K562 (cell line): ENCODE measurements at regions of chrX and their contacts with region 1.

Region 1: GRCh38 chrX:38803586-38804431 is 2.5 kb downstream of the MID1IP1 start:
- DNase-seq: peak; percentile 75 to 91 (median 84)
- ATAC-seq: peak; percentile 73
- H3K4me3 ChIP-seq: peak overlapping the region; percentile 86
- H3K27ac ChIP-seq: peak overlapping the region; percentile 96
- H3K4me1 ChIP-seq: peaks cover 19 to 34% of the 10 kb centered on the region in 2 experiments
- H3K27me3 ChIP-seq: no peaks in the 10 kb centered on the region
- CTCF ChIP-seq: 0 out of 6 replicates have a peak, but pooled peaks of 1 of the 3 experiments have one; percentile 1
- EP300 ChIP-seq: peak; percentile 15; the same call in 1 of the 2 replicates
- POLR2A ChIP-seq: peak; percentile 96
- RAD21 ChIP-seq: 0 out of 4 replicates have a peak, but pooled peaks of 1 of the 2 experiments have one; percentile 6

Region 2: GRCh38 chrX:38636949-38637819 is 166.6 kb before region 1 on chrX:
- CTCF ChIA-PET with region 1: no interaction called
- POLR2A ChIA-PET with region 1: no interaction called
- in situ Hi-C with region 1: no loop called
- intact Hi-C with region 1: loop called (anchors 5 kb)
- DNase-seq: no peak
- ATAC-seq: no peak
- H3K4me3 ChIP-seq: no peak overlapping the region
- H3K27ac ChIP-seq: no peak overlapping the region; the same call in 2 of the 3 replicates
- H3K4me1 ChIP-seq: peaks cover 8 to 69% of the 10 kb centered on the region in 2 experiments
- H3K27me3 ChIP-seq: no peaks in the 10 kb centered on the region
- CTCF ChIP-seq: no peak
- EP300 ChIP-seq: no peak
- POLR2A ChIP-seq: no peak
- RAD21 ChIP-seq: no peak

Region 3: DNA sequence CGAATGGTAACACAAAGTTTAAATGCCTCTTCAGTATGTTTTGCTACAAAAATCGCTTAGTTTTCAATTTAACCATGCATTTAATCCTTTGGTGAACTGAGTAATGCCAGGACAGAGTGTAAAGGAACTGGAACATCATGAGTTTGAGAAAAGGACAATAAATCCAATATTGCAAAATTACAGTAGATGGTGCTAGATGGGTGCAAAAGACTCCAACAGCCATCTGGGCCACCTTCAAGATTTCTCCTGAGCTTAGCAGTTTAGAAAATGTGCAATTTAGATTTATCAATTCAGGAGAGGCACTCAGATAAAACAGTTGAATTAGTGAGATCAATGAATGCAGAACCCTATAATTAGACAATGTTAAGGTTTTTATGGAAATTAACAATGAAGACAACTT is 35.7 kb before region 1 on chrX:
- CTCF ChIA-PET with region 1: no interaction called
- POLR2A ChIA-PET with region 1: interaction called, 7 read pairs
- in situ Hi-C with region 1: no loop called
- intact Hi-C with region 1: loop called (anchors 1 kb)
- DNase-seq: peak in 1 of 4 experiments; percentile 23
- ATAC-seq: 0 out of 3 replicates have a peak, but pooled peaks have one; percentile 17
- H3K4me3 ChIP-seq: no peak overlapping the region
- H3K27ac ChIP-seq: no peak overlapping the region
- H3K4me1 ChIP-seq: peaks cover 0 to 5% of the 10 kb centered on the region in 2 experiments; a peak in 2 of 5 replicates
- H3K27me3 ChIP-seq: no peaks in the 10 kb centered on the region
- CTCF ChIP-seq: peak; percentile 38 to 62 (median 46); a peak in 4 of 6 replicates
- EP300 ChIP-seq: no peak
- POLR2A ChIP-seq: no peak
- RAD21 ChIP-seq: peak; percentile 51 to 71

Region 4: DNA sequence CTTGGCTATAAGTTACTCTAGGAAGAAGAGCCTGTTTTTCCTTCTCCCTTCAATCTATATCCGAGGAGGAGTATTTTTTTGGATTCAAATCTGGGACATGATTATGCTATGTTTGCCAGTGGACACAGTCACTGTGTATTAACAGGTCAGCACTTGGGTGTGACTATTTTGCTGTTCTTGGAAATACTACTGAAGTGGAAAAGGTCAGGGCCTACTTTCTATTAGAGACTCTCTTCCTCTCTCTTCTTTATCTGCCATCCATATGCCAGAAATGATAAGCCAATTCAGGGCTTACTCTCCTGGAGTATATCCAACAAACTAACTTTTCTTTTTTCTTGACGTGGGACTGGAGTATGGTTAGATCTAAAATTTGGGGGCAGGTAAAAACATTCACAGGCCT is 37.9 kb after region 1 on chrX:
- CTCF ChIA-PET with region 1: no interaction called
- POLR2A ChIA-PET with region 1: no interaction called
- in situ Hi-C with region 1: no loop called
- intact Hi-C with region 1: loop called (anchors 5 kb)
- DNase-seq: peak; percentile 14 to 69 (median 33)
- ATAC-seq: peak; percentile 93
- H3K4me3 ChIP-seq: no peak overlapping the region
- H3K27ac ChIP-seq: peak overlapping the region; percentile 15; the same call in 1 of the 3 replicates
- H3K4me1 ChIP-seq: peaks cover 0 to 20% of the 10 kb centered on the region in 2 experiments; a peak in 2 of 5 replicates
- H3K27me3 ChIP-seq: no peaks in the 10 kb centered on the region
- CTCF ChIP-seq: no peak
- EP300 ChIP-seq: peak; percentile 79
- POLR2A ChIP-seq: no peak
- RAD21 ChIP-seq: no peak

Region 5: DNA sequence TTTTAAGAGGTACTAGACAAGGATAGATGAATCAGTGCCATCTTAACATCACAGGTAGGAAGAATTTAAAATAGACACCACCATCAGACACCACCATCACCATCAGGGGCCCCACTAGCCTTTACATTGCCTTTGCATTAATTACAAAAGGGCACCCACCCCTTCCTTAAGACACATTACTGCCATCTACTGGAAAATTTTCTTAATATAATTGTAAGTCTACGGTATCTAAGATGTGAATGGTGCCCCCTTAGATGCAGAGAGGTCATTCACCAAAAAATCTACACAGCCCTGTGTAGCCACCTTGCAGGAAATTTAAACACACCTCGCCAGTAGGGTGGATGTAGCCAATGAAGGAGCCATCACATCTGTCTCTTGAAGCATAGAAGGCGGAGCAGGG is 181.6 kb after region 1 on chrX:
- CTCF ChIA-PET with region 1: interaction called, 3 read pairs
- POLR2A ChIA-PET with region 1: no interaction called
- in situ Hi-C with region 1: no loop called
- intact Hi-C with region 1: loop called (anchors 2 kb)
- DNase-seq: peak; percentile 9 to 36 (median 18)
- ATAC-seq: peak; percentile 81
- H3K4me3 ChIP-seq: no peak overlapping the region
- H3K27ac ChIP-seq: no peak overlapping the region
- H3K4me1 ChIP-seq: peaks cover 0 to 7% of the 10 kb centered on the region in 2 experiments; a peak in 3 of 5 replicates
- H3K27me3 ChIP-seq: no peaks in the 10 kb centered on the region
- CTCF ChIP-seq: peak; percentile 25 to 51 (median 50); a peak in 3 of 6 replicates
- EP300 ChIP-seq: no peak
- POLR2A ChIP-seq: no peak
- RAD21 ChIP-seq: peak; percentile 44 to 66

Region 6: GRCh38 chrX:39162322-39162735 is 358.5 kb after region 1 on chrX:
- CTCF ChIA-PET with region 1: no interaction called
- POLR2A ChIA-PET with region 1: no interaction called
- in situ Hi-C with region 1: no loop called
- intact Hi-C with region 1: no loop called
- DNase-seq: no peak
- ATAC-seq: peak; percentile 35; the same call in 1 of the 3 replicates
- H3K4me3 ChIP-seq: no peak overlapping the region
- H3K27ac ChIP-seq: no peak overlapping the region
- H3K4me1 ChIP-seq: 0 out of 5 replicates have a peak, but pooled peaks cover 0 to 4% of the 10 kb centered on the region in 2 experiments
- H3K27me3 ChIP-seq: peaks cover 0 to 20% of the 10 kb centered on the region in 2 experiments; a peak in 2 of 5 replicates
- CTCF ChIP-seq: no peak
- EP300 ChIP-seq: no peak
- POLR2A ChIP-seq: no peak
- RAD21 ChIP-seq: no peak